GM23248 (cell line): ENCODE measurements at regions of chr9 and their contacts with region 1.

Region 1: DNA sequence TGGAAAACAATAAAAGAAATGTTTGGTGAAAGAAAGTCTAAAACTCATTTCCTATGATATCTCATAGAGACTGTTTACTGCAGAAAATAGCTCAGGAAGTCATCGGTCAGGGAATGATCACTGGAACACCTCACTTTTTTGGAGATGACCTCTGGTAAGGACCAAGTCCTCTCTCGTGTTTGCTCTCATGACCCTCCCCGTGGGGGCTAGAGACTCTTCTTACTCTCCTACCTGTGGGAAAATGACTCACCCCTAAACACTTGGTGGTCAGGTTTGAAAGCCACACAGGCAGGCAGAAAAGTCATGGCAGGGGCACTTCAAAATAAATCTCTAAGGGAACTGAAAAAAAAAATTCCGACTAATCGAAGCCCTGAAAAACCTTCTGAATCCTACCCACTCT is 48.2 kb downstream of the FAM240B start:
- DNase-seq: no peak
- H3K4me3 ChIP-seq: no peak overlapping the region
- H3K27ac ChIP-seq: no peak overlapping the region
- H3K4me1 ChIP-seq: no peaks in the 10 kb centered on the region
- H3K27me3 ChIP-seq: peaks cover 19% of the 10 kb centered on the region

Region 2: DNA sequence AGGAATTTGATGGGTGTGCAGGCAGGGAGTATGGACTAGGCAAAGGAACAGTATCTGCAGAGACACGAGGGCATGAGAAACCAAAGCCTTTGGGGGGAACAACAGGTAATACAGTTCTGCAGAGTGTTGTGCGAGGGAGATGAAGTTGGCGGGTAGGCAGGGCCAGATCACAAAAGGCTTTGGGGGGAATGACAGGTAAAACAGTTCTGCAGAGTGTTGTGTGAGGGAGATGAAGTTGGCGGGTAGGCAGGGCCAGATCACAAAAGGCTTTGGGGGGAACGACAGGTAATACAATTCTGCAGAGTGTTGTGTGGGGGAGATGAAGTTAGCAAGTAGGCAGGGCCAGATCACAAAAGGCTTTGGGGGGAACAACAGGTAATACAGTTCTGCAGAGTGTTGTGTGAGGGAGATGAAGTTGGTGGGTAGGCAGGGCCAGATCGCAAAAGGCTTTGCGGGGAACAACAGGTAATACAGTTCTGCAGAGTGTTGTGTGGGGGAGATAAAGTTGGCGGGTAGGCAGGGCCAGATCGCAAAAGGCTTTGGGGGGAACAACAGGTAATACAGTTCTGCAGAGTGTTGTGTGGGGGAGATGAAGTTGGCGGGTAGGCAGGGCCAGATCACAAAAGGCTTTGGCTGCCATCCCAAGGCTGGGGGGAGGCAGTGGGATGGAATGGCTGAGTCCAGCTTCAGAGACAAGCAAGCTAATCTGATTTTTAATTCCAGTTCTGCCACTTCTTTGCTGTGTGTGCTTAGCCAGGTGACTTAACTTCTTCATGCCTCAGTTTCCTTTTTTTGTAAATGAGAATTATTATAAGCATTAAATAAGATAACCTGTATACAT is 988.0 kb before region 1 on chr9:
- in situ Hi-C with region 1: no loop called
- DNase-seq: no peak
- H3K4me3 ChIP-seq: no peak overlapping the region
- H3K27ac ChIP-seq: no peak overlapping the region
- H3K4me1 ChIP-seq: no peaks in the 10 kb centered on the region
- H3K27me3 ChIP-seq: peaks cover 50% of the 10 kb centered on the region

Region 3: GRCh38 chr9:38756702-38757101 is 85.0 kb after region 1 on chr9:
- in situ Hi-C with region 1: loop called (anchors 10 kb)
- DNase-seq: no peak
- H3K4me3 ChIP-seq: no peak overlapping the region
- H3K27ac ChIP-seq: no peak overlapping the region
- H3K4me1 ChIP-seq: no peaks in the 10 kb centered on the region
- H3K27me3 ChIP-seq: no peaks in the 10 kb centered on the region